Posterior vena cava (tissue), 2 donors: ENCODE measurements at regions of chr13 and their contacts with region 1.

Region 1: DNA sequence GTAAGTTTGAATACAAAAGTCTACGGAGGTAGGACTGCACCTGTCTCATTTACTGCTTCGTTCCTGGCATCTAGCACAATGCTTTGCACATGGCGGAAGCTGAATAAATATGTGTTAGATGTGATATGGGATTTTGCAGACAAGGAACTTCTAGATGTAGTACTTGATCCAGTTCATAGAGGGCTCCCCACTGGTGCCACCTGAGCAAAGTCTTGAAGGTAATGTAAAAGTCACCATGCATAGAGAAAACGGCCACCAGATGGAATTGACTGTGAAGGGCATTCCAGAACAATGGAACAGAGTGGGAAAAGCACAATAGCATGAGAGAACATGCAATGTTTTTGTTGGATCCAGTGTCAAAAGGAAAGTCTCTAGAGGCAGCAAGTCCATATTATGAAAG is 209.3 kb downstream of the HS6ST3 start:
- DNase-seq: no peak

Region 2: GRCh38 chr13:96817336-96817941 is 518.2 kb after region 1 on chr13:
- intact Hi-C with region 1: loop called in 1 of 2 experiments (anchors 2 kb)
- DNase-seq: no peak